Ovary (tissue), 10 donors: ENCODE measurements at regions of chr20 and their contacts with region 1.

Region 1: GRCh38 chr20:36984257-36984638 is 32.7 kb upstream of the SAMHD1 start:
- DNase-seq: no peak
- H3K4me3 ChIP-seq: no peak overlapping the region
- H3K27ac ChIP-seq: no peak overlapping the region
- H3K4me1 ChIP-seq: no peaks in the 10 kb centered on the region
- H3K27me3 ChIP-seq: no peaks in the 10 kb centered on the region
- CTCF ChIP-seq: no peak
- EP300 ChIP-seq: no peak
- POLR2A ChIP-seq: no peak

Region 2: DNA sequence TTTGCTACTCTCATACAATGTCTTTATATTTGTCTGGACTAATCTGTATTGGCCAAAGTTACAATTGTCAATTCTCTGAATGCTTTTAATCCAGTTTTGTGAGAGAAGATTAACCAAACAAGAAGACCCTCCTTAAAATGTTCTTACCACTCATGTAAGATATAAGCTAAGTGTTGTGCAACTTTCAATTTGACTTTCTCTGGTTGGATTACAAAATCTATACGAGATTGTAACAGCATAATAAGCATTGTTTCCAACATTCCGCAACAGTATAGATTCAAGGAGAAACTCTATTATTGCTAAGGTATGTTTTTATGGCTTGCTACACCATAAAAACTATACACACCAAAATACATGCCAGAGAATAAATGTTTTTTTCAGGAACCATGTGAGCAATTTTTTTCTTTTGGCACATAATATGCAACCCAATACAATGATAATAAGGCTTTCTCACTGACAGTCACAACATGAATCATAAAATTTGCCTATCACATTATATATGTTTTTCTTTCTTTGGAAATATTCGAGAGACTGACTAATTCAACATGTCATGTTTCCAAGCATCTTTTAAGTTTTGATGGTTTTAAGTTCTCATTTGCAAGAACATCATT is 1879.5 kb before region 1 on chr20:
- intact Hi-C with region 1: loop called in 1 of 4 experiments (anchors 5 kb)
- DNase-seq: no peak
- H3K4me3 ChIP-seq: no peak overlapping the region
- H3K27ac ChIP-seq: no peak overlapping the region
- H3K4me1 ChIP-seq: no peaks in the 10 kb centered on the region
- H3K27me3 ChIP-seq: no peaks in the 10 kb centered on the region
- CTCF ChIP-seq: no peak
- EP300 ChIP-seq: no peak
- POLR2A ChIP-seq: no peak